ENCODE measurements at regions of chr3 and their contacts with region 1.

Region 1: GRCh38 chr3:172355839-172356238 is 92.4 kb downstream of the GHSR start:
- DNase-seq: no peak
- H3K4me3 Mint-ChIP-seq: no peak overlapping the region
- H3K27ac Mint-ChIP-seq: peak overlapping the region; percentile 64
- H3K4me1 Mint-ChIP-seq: peaks cover 27% of the 10 kb centered on the region
- H3K27me3 Mint-ChIP-seq: no peaks in the 10 kb centered on the region
- CTCF ChIP-seq: no peak

Region 2: DNA sequence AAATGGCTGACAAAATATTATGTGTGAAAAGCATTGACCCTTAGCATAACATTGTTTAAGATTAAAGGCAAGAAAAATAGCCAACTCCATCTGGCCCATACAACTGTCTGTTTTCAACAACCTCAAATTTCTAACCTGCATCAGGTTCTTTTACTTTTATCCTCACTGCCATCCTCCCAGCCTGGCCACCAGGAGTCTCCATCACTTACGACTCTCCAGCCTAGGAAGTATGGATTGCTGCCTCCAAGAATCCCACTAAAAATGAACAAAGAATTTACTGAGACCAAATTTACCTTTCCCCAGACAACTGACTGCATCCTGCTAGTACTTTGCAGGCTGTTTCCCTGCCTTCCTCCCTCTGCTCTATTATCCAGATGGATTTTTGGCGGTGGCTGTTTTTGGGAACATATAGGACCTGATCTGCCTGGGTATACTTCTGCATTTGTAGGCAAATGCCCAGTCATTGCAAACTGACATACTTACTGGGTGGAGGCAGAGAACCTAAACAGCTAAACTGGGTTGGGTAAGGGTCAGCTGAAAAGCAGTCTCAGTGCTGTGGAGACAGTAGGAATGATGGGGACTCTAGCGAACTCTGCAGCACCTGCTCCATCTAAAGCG is 51.8 kb before region 1 on chr3:
- CTCF ChIA-PET with region 1: no interaction called
- intact Hi-C with region 1: no loop called
- DNase-seq: no peak
- H3K4me3 Mint-ChIP-seq: no peak overlapping the region
- H3K27ac Mint-ChIP-seq: peak overlapping the region; percentile 62
- H3K4me1 Mint-ChIP-seq: peaks cover 45% of the 10 kb centered on the region
- H3K27me3 Mint-ChIP-seq: no peaks in the 10 kb centered on the region
- CTCF ChIP-seq: peak; percentile 53

Region 3: DNA sequence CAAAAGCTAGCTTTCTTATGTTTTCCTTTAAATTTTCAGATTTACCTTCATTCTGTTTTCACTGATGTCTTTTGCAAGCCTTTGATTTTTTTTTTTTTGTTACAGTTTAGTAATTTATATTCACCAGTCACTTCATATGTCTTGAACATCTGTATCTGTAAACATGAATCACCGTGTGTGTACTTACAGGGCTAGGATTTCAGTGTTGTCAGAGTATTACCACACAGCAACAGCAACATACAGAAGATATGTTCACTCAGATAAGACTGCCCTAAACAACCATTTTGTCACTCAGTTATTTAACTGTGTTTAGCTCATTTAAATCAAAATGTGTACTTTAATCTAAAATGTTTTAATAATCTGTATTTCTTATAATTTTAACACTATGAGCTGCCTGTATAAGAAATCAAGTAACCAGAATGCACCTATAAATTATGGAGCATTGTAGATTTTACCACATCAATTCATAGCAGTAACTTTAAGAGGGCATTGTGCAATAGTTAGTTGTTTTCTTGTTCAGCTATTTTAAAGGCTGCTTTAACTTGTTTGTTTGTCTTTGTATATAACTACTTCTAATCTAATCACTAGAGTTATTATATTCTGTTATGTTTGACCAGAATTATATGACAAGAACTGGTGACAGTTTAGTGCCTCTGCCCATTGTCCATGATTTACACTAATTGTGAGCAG is 42.0 kb after region 1 on chr3:
- CTCF ChIA-PET with region 1: no interaction called
- intact Hi-C with region 1: no loop called
- DNase-seq: no peak
- H3K4me3 Mint-ChIP-seq: no peak overlapping the region
- H3K27ac Mint-ChIP-seq: no peak overlapping the region
- H3K4me1 Mint-ChIP-seq: no peaks in the 10 kb centered on the region
- H3K27me3 Mint-ChIP-seq: no peaks in the 10 kb centered on the region
- CTCF ChIP-seq: no peak

Region 4: GRCh38 chr3:172607305-172608121 is 251.7 kb after region 1 on chr3:
- CTCF ChIA-PET with region 1: no interaction called
- intact Hi-C with region 1: loop called (anchors 10 kb)
- DNase-seq: peak; percentile 60
- H3K4me3 Mint-ChIP-seq: no peak overlapping the region
- H3K27ac Mint-ChIP-seq: peak overlapping the region; percentile 79
- H3K4me1 Mint-ChIP-seq: peaks cover 34% of the 10 kb centered on the region
- H3K27me3 Mint-ChIP-seq: no peaks in the 10 kb centered on the region
- CTCF ChIP-seq: no peak

Measured in Calu3 (cell line).